SK-N-SH (cell line): ENCODE measurements at regions of chr10 and their contacts with region 1.

Region 1: DNA sequence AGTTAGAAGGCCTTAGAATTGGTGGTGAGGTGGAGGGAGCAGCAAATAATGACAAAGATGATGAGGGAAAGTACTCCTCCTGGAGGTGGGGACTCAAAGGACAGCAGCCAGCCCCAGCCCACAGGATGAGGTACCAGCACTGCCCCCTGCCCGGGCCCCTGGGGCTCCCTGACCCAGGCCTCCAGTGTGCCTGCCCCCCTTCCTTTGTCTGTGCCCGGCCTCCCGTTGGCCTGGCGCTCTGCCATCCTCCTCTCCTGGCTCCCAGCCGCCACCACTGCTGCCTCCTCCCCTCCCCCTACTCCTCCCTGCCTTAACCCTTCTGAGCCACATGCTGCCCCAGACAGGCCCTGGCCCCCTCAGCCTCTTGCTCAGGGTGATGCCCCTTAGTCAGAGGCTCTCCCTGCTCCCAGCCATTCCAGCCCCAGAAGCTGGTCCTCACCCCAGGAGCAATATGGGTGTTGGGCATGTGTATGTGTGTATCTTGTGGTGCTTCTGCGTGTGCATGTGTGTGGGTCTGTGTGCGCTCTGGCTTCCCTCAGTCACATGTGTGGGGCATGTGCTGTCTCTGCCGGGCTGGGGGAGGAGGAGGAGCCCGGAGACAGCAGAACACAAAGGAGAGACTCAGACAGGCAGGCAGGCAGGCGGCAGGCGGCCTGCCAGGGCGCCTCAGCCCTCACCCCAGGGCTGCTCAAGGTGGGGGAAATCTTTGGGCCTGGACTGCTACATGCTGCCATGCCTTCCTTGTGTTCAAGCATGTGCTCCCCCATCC is 2.6 kb downstream of the LDB1 start:
- DNase-seq: peak; percentile 89
- H3K4me3 ChIP-seq: peak overlapping the region; percentile 29 to 86
- H3K27ac ChIP-seq: peak overlapping the region; percentile 86 to 99
- H3K4me1 ChIP-seq: peaks cover 49 to 65% of the 10 kb centered on the region in 2 experiments
- H3K27me3 ChIP-seq: no peaks in the 10 kb centered on the region
- CTCF ChIP-seq: peak; percentile 40
- EP300 ChIP-seq: peak in 1 of 2 experiments; percentile 43; a peak in 2 of 4 replicates
- RAD21 ChIP-seq: peak; percentile 45; the same call in 1 of the 2 replicates

Region 2: GRCh38 chr10:102101152-102101551 is 16.4 kb before region 1 on chr10:
- CTCF ChIA-PET with region 1: interaction called, 12 read pairs
- POLR2A ChIA-PET with region 1: interaction called, 4 read pairs
- DNase-seq: no peak
- H3K4me3 ChIP-seq: no peak overlapping the region
- H3K27ac ChIP-seq: no peak overlapping the region
- H3K4me1 ChIP-seq: no peaks in the 10 kb centered on the region
- H3K27me3 ChIP-seq: no peaks in the 10 kb centered on the region
- CTCF ChIP-seq: no peak
- EP300 ChIP-seq: no peak
- RAD21 ChIP-seq: no peak

Region 3: DNA sequence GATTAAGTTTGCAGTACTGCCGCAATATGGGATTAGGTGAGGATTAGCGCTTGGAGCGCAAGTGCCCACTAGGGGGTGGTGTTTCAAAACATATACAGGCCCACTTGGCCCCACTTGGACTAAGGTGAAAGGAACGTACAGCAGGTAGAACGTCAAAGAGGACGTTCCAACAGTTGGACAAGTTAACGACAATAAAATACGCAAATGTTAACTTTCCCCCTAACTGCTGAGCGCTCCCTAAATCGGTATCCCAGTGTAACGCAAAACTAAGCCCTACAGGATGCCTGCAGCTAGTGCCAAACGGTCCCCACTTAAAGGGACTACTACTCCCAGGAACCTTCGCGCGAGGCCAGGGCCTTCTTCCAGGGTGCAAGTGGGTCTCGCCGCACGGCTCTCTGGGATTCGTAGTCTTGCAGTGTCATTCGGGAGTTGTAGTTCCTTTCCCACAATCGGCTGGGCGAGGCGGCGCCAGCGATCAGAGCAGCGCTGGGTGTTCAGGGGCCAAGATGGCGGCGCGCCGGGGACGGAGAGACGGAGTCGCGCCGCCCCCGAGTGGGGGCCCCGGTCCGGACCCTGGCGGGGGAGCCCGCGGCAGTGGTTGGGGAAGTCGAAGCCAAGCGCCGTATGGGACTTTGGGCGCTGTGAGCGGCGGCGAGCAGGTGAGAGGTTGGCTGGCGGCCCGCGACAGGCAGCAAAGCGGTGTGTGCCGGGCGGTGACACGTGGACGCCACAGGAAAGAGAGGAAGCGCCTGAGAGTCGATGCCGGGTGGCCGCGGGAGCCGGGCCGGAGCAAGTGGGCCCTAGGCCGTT is 15.2 kb after region 1 on chr10 and contains the start of gene PPRC1:
- CTCF ChIA-PET with region 1: interaction called, 39 read pairs
- POLR2A ChIA-PET with region 1: no interaction called
- DNase-seq: peak; percentile 95
- H3K4me3 ChIP-seq: peak within 1 kb of the TSS; percentile 90 to 99
- H3K27ac ChIP-seq: peak within 1 kb of the TSS; percentile 80 to 91
- H3K4me1 ChIP-seq: peaks cover 13 to 18% of the 10 kb centered on the region in 2 experiments; a peak in 2 of 4 replicates
- H3K27me3 ChIP-seq: no peaks in the 10 kb centered on the region
- CTCF ChIP-seq: peak; percentile 97
- EP300 ChIP-seq: no peak
- RAD21 ChIP-seq: peak; percentile 72
- polyA plus RNA-seq, gene PPRC1: 22.6 and 23.1 TPM in 2 replicates